Activated B cell treated with CpG ODN at 0.5 μM for 24 hours (primary cell): ENCODE measurements at regions of chr13 and their contacts with region 1.

Region 1: DNA sequence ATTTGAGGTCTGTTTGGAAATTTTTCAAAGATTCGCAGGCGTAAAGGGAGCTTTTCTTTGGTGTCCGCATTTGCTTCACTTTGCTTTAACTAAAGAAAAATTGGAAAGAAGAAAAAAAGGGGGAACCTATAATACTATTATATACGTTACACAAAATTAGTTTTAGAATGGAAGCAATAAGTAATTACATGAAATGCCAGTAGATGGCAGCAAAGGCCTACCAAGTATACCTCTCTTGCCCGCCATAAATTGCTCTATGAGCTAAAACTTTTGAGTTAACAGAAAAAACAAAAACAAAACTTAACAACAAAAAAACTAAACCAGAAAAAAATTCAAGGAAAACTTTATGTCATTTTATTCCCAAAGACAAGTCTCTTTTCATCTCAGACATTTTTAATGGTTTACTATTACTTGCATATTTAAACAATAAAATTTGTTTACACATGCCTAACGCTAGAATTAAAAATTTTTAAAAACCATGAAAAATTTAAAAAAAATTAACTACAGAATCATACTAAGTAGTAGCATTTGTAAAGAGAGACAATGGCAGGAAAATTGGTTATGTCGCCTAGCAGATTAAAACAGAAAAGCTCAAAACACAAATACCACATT is 271.4 kb downstream of the NALCN start:
- DNase-seq: no peak
- ATAC-seq: no peak
- H3K4me3 Mint-ChIP-seq: no peak overlapping the region
- H3K27ac Mint-ChIP-seq: no peak overlapping the region
- H3K4me1 Mint-ChIP-seq: no peaks in the 10 kb centered on the region
- H3K27me3 Mint-ChIP-seq: peaks cover 19% of the 10 kb centered on the region
- CTCF ChIP-seq: peak; percentile 36

Region 2: DNA sequence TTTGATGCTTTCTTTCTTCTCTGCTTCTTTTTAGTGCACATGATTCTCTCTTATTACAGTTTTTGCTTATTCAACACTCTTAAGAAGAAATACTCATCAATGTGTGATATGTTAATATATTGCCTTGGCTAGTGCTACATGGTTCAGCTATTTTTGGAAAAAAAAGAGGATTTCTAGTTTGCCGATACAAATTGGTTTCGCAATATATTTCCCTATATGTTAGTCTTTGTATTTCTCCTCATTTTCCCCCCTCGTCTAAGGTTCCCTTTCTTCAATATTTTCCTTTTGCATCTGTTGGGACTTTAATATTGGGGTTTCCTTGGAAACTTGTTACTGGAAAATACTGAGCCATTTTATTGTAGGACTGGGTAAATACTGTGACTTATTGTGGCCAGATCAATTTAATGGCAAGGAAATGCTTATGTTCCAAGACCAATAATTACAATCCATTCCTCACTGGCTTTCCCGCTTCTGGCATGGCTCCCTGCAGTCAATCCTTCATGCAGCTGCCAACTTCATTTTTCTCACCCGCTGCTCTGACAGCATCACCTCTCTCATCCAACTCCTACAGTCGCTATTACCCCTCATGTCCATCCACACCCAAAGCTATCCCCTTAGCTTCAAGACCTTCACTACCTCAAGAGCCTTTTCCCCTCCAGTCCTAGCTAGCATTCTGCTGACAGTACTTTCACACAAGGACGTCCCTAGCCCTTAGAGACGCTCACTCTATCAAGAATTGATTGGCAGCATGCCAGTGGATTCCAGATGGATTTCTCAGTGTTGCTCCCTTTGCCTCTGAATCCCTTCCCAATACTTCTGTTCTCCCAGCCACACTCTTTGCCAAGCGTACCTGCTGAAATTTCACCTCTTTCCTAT is 190.2 kb before region 1 on chr13:
- CTCF ChIA-PET with region 1: no interaction called
- POLR2A ChIA-PET with region 1: no interaction called
- intact Hi-C with region 1: no loop called
- DNase-seq: no peak
- ATAC-seq: no peak
- H3K4me3 Mint-ChIP-seq: no peak overlapping the region
- H3K27ac Mint-ChIP-seq: no peak overlapping the region
- H3K4me1 Mint-ChIP-seq: no peaks in the 10 kb centered on the region
- H3K27me3 Mint-ChIP-seq: no peaks in the 10 kb centered on the region
- CTCF ChIP-seq: no peak

Region 3: GRCh38 chr13:101155920-101156319 is 11.0 kb after region 1 on chr13:
- CTCF ChIA-PET with region 1: interaction called, 15 read pairs
- POLR2A ChIA-PET with region 1: no interaction called
- intact Hi-C with region 1: no loop called
- DNase-seq: no peak
- ATAC-seq: no peak
- H3K4me3 Mint-ChIP-seq: no peak overlapping the region
- H3K27ac Mint-ChIP-seq: no peak overlapping the region
- H3K4me1 Mint-ChIP-seq: peaks cover 2% of the 10 kb centered on the region
- H3K27me3 Mint-ChIP-seq: peaks cover 10% of the 10 kb centered on the region
- CTCF ChIP-seq: no peak

Region 4: DNA sequence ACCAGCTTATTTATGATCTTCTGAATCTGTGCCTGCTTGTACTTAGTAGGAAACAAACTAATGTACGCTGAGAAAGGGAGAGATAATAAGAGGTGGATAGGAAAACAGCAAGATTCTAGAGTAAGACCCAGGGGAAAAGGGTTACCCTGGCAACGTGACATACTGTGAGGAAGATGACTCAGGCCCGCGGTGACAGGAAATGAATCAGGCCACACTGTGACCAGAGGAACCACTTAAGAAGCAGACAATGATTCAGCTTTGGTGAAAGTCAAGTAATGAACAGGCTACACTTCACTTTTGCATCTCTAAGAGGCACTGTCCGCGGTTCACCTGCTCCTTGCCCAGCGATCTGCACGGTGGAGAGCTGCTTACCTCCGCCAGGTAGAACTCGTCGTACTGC is 113.2 kb after region 1 on chr13:
- CTCF ChIA-PET with region 1: no interaction called
- POLR2A ChIA-PET with region 1: no interaction called
- intact Hi-C with region 1: no loop called
- DNase-seq: no peak
- ATAC-seq: peak; percentile 49
- H3K4me3 Mint-ChIP-seq: no peak overlapping the region
- H3K27ac Mint-ChIP-seq: no peak overlapping the region
- H3K4me1 Mint-ChIP-seq: no peaks in the 10 kb centered on the region
- H3K27me3 Mint-ChIP-seq: no peaks in the 10 kb centered on the region
- CTCF ChIP-seq: no peak

Region 5: GRCh38 chr13:101514788-101515187 is 369.9 kb after region 1 on chr13:
- CTCF ChIA-PET with region 1: interaction called, 3 read pairs
- POLR2A ChIA-PET with region 1: no interaction called
- intact Hi-C with region 1: loop called (anchors 5 kb)
- DNase-seq: no peak
- ATAC-seq: no peak
- H3K4me3 Mint-ChIP-seq: no peak overlapping the region
- H3K27ac Mint-ChIP-seq: no peak overlapping the region
- H3K4me1 Mint-ChIP-seq: no peaks in the 10 kb centered on the region
- H3K27me3 Mint-ChIP-seq: no peaks in the 10 kb centered on the region
- CTCF ChIP-seq: no peak

Region 6: DNA sequence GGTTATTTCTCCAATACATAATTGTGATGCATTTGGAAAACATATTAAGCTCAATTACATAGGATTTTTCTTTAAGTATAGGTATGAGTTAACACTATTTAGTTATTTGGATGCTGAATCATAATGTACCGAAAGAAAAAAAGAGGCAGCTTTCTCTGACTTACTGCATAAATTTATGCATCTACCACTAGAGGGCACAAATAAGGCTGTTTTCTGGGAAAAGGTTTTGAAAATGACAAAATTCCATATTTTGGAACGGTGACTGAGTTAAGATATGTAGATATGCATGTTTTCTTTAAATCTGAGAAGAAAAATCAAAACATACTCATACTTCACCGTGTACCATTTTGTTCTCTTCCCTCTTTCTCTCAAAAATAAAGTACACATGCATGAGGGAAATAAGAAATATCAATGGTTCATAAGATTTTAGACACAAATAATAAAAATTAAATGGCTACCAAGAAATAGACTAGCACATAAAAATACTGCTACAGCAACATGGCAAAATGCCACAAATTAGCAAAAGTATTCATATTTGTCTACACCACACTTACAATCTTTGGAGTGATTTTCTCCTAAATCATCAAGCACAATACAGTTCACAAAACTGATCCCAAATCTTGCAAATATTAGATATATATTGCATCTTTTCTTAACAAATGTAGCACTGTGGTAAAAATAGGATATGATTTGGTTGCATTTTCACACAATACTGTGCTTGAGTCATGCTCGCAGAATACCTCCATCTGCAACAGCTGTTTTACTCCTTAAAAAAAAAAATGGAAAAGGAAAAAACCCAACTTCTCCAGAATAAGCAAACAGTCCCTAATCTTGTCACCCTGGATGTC is 996.9 kb after region 1 on chr13:
- CTCF ChIA-PET with region 1: interaction called, 4 read pairs
- POLR2A ChIA-PET with region 1: no interaction called
- intact Hi-C with region 1: loop called (anchors 2 kb)
- DNase-seq: no peak
- ATAC-seq: no peak
- H3K4me3 Mint-ChIP-seq: no peak overlapping the region
- H3K27ac Mint-ChIP-seq: no peak overlapping the region
- H3K4me1 Mint-ChIP-seq: no peaks in the 10 kb centered on the region
- H3K27me3 Mint-ChIP-seq: no peaks in the 10 kb centered on the region
- CTCF ChIP-seq: no peak

Region 7: DNA sequence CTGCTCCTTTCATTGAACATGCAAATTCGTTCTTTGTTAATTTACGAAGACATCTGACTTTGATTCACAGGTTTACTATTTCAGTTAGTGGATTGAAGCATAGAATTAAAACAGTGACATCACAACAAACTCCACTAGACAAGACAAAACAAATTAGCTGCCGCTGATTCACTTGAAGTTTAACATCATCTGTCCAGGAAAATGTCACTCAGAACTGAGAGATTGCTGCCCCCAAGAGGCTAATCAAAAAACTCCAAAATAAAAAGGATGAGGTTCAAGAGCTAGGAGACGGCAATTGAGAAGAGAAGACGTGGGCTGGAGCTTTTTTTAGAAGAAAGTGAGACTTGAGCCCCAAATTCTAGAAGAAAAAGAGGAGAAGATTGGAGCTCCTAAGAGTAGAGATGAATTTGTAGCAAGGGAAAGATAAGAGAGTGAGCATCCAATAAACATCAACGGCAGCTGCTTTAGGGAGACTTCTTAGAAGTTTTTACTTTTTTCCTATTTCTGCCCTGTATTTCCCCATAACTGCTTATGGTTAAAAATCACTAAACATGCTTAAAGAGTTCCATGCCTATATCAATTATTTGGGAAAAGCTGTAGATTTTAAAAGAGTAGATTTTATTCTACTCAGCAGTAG is 1411.1 kb after region 1 on chr13:
- CTCF ChIA-PET with region 1: interaction called, 14 read pairs
- POLR2A ChIA-PET with region 1: no interaction called
- intact Hi-C with region 1: loop called (anchors 1 kb)
- DNase-seq: no peak
- ATAC-seq: no peak
- H3K4me3 Mint-ChIP-seq: no peak overlapping the region
- H3K27ac Mint-ChIP-seq: no peak overlapping the region
- H3K4me1 Mint-ChIP-seq: no peaks in the 10 kb centered on the region
- H3K27me3 Mint-ChIP-seq: peaks cover 6% of the 10 kb centered on the region
- CTCF ChIP-seq: no peak

Region 8: GRCh38 chr13:102854675-102855074 is 1709.8 kb after region 1 on chr13:
- CTCF ChIA-PET with region 1: no interaction called
- POLR2A ChIA-PET with region 1: no interaction called
- intact Hi-C with region 1: loop called (anchors 5 kb)
- DNase-seq: no peak
- ATAC-seq: no peak
- H3K4me3 Mint-ChIP-seq: no peak overlapping the region
- H3K27ac Mint-ChIP-seq: peak overlapping the region; percentile 35
- H3K4me1 Mint-ChIP-seq: peaks cover 9% of the 10 kb centered on the region
- H3K27me3 Mint-ChIP-seq: no peaks in the 10 kb centered on the region
- CTCF ChIP-seq: no peak